Heart right ventricle (tissue), 16 donors: ENCODE measurements at regions of chr1 and their contacts with region 1.

Region 1: DNA sequence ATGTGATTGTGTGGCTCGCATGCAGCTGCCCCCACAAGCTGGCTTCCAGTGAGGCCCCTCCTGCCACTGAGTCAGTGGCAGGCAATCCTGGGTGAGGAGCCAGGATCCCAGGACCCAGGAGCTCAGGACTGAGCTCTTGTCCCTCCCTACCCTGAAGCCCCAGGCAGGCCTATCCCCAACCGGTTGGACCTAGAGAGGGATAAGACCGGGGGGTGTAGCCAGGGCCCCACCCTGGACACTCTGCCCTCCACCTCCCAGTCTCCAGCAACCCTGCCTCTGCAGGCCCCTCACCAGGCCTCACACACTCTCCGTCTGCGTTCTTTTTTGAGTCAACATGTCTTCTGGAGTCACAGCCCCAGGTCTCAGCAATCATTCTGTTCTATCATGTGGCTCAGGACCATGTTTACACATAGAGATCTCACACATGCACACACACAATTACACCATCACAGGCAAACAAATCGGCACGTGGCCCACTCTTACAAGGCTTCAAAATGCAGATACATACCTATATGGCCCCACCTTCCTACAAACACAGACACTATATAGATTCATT is 2.6 kb downstream of the VSIG8 start:
- DNase-seq: no peak
- ATAC-seq: no peak
- H3K4me3 ChIP-seq: no peak overlapping the region
- H3K27ac ChIP-seq: no peak overlapping the region
- H3K4me1 ChIP-seq: peaks cover 0 to 16% (median 6%) of the 10 kb centered on the region in 9 donors
- H3K27me3 ChIP-seq: no peaks in the 10 kb centered on the region
- CTCF ChIP-seq: no peak

Region 2: GRCh38 chr1:159839116-159839849 is 20.6 kb before region 1 on chr1:
- intact Hi-C with region 1: loop called in 1 of 10 experiments (anchors 2 kb)
- DNase-seq: no peak
- ATAC-seq: no peak
- H3K4me3 ChIP-seq: no peak overlapping the region
- H3K27ac ChIP-seq: no peak overlapping the region
- H3K4me1 ChIP-seq: no peaks in the 10 kb centered on the region
- H3K27me3 ChIP-seq: no peaks in the 10 kb centered on the region
- CTCF ChIP-seq: no peak

Region 3: DNA sequence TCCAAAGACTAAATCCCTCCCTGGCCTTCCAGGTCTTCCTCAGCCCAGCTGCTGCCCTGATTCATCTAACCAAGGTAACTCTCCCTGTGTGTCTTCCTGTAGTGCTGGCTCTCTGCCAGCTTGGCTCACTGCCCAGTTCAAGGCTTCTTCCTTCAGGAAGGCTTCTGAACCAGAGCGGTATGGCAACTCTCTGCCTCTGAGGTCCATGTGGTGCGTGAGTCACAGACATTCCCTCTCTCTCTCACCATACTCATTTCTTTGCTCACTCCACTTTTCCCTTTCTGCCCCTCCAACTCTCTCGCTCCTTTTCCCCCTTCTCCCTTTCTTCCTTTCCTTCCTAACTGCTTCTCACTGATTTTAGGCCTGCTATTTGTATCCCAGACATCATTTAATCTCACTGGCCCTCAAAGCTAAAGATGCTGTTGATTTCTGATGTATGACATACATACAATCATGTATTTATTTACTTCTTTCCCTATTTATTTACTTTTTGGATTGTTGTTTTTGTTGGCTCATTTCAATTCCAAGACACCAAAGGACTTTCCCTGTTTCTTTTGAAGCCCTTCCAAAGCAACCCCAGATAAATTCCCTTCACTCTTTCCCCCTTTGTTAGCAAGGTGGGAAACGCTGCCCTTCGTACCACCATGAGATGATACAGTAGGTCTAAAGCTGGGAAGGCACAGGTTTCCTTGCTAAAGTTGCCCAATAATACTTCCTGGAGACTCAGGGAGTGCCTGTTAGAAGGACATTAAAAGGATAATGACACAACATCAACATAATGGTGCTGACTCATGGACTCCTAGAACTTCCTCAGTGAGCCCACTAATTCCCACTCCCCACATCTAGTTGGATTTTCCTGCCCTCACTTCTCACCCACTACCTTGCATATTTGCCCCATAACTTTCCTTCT is 22.3 kb after region 1 on chr1:
- intact Hi-C with region 1: loop called in 1 of 10 experiments (anchors 2 kb)
- DNase-seq: peak; percentile 48 to 65
- ATAC-seq: peak in 5 of 8 donors; percentile 31 to 70 (median 56)
- H3K4me3 ChIP-seq: no peak overlapping the region
- H3K27ac ChIP-seq: peak overlapping the region in 1 of 10 donors; percentile 56
- H3K4me1 ChIP-seq: peaks cover 0 to 33% (median 0%) of the 10 kb centered on the region in 9 donors
- H3K27me3 ChIP-seq: no peaks in the 10 kb centered on the region
- CTCF ChIP-seq: no peak

Region 4: GRCh38 chr1:159924981-159925712 is 65.3 kb after region 1 on chr1 and contains the start of gene TAGLN2:
- intact Hi-C with region 1: loop called in 3 of 10 experiments (anchors 2 to 10 kb)
- DNase-seq: peak; percentile 93 to 94
- ATAC-seq: peak; percentile 71 to 88 (median 80)
- H3K4me3 ChIP-seq: peak within 1 kb of the TSS; percentile 67 to 97 (median 83)
- H3K27ac ChIP-seq: peak within 1 kb of the TSS; percentile 94 to 100 (median 98)
- H3K4me1 ChIP-seq: peaks cover 7 to 48% (median 39%) of the 10 kb centered on the region in 9 donors
- H3K27me3 ChIP-seq: no peaks in the 10 kb centered on the region
- CTCF ChIP-seq: no peak
- total RNA-seq, gene TAGLN2: 65.9 to 228 (median 92.5) TPM